ENCODE measurements at regions of chr4 and their contacts with region 1.

Region 1: DNA sequence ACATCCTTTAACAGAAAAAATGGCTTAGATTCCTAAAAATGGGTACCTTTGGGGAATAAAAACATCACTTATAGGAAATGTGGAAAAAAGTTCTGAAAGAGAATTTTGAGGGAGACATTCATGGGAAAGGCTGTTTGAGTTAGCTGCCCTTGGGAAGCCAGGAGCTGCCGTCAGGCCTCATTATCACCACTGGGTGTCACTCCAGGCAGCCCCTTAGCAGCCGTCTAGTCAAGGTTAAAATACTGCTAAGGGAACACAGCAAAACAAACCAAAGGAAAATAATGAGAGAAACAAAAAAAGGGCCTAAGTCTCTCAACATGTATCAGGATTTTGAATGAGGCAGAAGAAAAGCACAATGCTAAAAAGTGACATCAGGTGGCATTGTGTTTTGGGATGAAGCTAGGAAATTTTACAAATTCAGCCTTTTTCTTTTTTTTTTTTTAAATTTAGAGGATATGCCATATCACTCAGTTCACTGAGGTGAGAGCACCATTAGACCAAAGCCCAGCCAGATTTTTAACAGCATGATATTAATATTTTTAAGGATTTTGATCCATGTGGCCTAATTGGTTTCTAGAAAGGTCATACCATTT is 235.3 kb downstream of the GPAT3 start:
- DNase-seq: peak; percentile 36 to 53
- H3K4me3 ChIP-seq: no peak overlapping the region
- H3K27ac ChIP-seq: no peak overlapping the region
- H3K4me1 ChIP-seq: no peaks in the 10 kb centered on the region; a peak in 1 of 7 replicates
- H3K27me3 ChIP-seq: no peaks in the 10 kb centered on the region
- CTCF ChIP-seq: peak; percentile 72 to 77 (median 72)
- EP300 ChIP-seq: no peak
- POLR2A ChIP-seq: no peak
- RAD21 ChIP-seq: peak; percentile 90 to 94

Region 2: DNA sequence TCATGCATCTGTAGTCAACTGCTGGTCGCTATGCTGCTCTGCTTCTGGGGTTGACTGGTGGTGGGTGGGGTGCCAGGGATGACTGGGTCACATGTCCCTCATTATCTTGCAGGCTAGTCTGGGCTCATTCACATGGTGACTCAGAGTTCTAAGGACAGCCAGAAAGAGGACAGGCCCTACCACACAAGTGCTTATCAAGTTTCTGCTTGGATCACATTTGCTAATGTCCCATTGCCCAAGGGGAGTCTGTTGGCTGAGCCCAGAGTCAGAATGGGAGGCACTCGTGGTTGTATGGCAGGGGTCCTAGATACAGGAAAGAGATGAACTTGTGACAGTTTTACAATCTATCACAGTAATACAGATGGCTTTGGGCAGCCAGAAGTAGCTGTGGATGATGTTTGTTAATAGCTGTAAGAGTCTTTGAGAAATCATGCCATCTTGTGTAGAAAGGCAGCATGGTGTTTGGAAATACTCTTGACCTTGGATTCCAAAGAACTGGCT is 14.0 kb before region 1 on chr4:
- CTCF ChIA-PET with region 1: interaction called, 13 read pairs
- POLR2A ChIA-PET with region 1: no interaction called
- DNase-seq: no peak
- H3K4me3 ChIP-seq: no peak overlapping the region
- H3K27ac ChIP-seq: no peak overlapping the region
- H3K4me1 ChIP-seq: peaks cover 0 to 5% (median 0%) of the 10 kb centered on the region in 4 experiments; a peak in 2 of 7 replicates
- H3K27me3 ChIP-seq: peaks cover 0 to 1% (median 0%) of the 10 kb centered on the region in 4 experiments; a peak in 1 of 7 replicates
- CTCF ChIP-seq: no peak
- EP300 ChIP-seq: no peak
- POLR2A ChIP-seq: no peak
- RAD21 ChIP-seq: no peak

Measured in H1 (cell line).